Activated CD4-positive, alpha-beta memory T cell treated with anti-CD3 and anti-CD28 coated beads for 36 hours (primary cell): ENCODE measurements at regions of chr12 and their contacts with region 1.

Region 1: GRCh38 chr12:89756585-89757321 is 48.1 kb upstream of the ATP2B1 start:
- DNase-seq: no peak
- H3K4me3 Mint-ChIP-seq: peak overlapping the region; percentile 44
- H3K27ac Mint-ChIP-seq: peak overlapping the region; percentile 79
- H3K4me1 Mint-ChIP-seq: peaks cover 36% of the 10 kb centered on the region
- H3K27me3 Mint-ChIP-seq: no peaks in the 10 kb centered on the region

Region 2: GRCh38 chr12:89636052-89636775 is 120.5 kb before region 1 on chr12:
- CTCF ChIA-PET with region 1: no interaction called
- POLR2A ChIA-PET with region 1: no interaction called
- intact Hi-C with region 1: loop called (anchors 1 kb)
- DNase-seq: peak; percentile 45
- H3K4me3 Mint-ChIP-seq: no peak overlapping the region
- H3K27ac Mint-ChIP-seq: peak overlapping the region; percentile 35
- H3K4me1 Mint-ChIP-seq: peaks cover 15% of the 10 kb centered on the region
- H3K27me3 Mint-ChIP-seq: no peaks in the 10 kb centered on the region

Region 3: GRCh38 chr12:89709157-89709994 is 47.4 kb before region 1 on chr12:
- CTCF ChIA-PET with region 1: interaction called, 4 read pairs
- POLR2A ChIA-PET with region 1: interaction called, 7 read pairs
- intact Hi-C with region 1: loop called (anchors 1 kb)
- DNase-seq: peak; percentile 99
- H3K4me3 Mint-ChIP-seq: peak overlapping the region; percentile 81
- H3K27ac Mint-ChIP-seq: peak overlapping the region; percentile 83
- H3K4me1 Mint-ChIP-seq: peaks cover 33% of the 10 kb centered on the region
- H3K27me3 Mint-ChIP-seq: no peaks in the 10 kb centered on the region

Region 4: GRCh38 chr12:89882050-89882449 is 125.3 kb after region 1 on chr12:
- CTCF ChIA-PET with region 1: no interaction called
- POLR2A ChIA-PET with region 1: no interaction called
- intact Hi-C with region 1: loop called (anchors 1 kb)
- DNase-seq: peak; percentile 65
- H3K4me3 Mint-ChIP-seq: no peak overlapping the region
- H3K27ac Mint-ChIP-seq: peak overlapping the region; percentile 70
- H3K4me1 Mint-ChIP-seq: peaks cover 40% of the 10 kb centered on the region
- H3K27me3 Mint-ChIP-seq: no peaks in the 10 kb centered on the region

Region 5: DNA sequence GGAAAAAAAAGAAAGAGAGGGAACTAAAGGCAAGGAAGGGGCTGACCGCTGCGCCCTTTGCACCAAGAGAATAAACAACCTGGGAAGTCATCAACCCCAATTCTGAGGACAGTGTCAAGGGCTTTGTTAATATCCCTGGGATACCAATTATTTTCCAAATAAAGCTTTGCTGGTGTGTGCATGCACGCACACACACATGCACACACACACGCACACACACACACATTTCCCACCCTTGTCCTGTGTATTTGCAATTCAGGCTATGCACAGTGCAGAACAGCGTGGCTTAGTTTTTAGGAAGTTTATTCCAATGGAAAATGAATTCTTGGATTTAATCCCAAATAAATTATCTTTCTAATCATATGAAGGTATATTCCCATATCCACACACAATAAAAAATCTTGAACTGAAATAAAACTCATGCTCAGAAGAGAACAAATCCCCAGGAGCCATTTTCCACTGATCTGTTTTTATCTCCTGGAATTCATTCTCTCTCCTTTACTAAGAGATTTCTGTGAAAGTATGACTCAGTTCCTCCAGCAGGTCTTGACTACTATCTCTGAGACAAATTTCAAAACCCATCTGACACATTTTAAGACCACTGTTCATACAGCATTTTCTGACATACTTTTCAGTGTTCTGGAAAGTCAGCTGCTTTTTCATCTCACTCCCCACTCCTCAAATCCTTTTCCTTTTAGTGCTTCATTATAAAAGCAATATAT is 286.3 kb after region 1 on chr12:
- CTCF ChIA-PET with region 1: no interaction called
- POLR2A ChIA-PET with region 1: no interaction called
- intact Hi-C with region 1: loop called (anchors 1 kb)
- DNase-seq: no peak
- H3K4me3 Mint-ChIP-seq: no peak overlapping the region
- H3K27ac Mint-ChIP-seq: no peak overlapping the region
- H3K4me1 Mint-ChIP-seq: peaks cover 9% of the 10 kb centered on the region
- H3K27me3 Mint-ChIP-seq: no peaks in the 10 kb centered on the region